Activated B cell treated with CpG ODN at 0.5 μM for 24 hours (primary cell): ENCODE measurements at regions of chr11 and their contacts with region 1.

Region 1: GRCh38 chr11:60477035-60477445 is 15.5 kb upstream of the MS4A12 start:
- DNase-seq: no peak
- ATAC-seq: peak; percentile 95
- H3K4me3 Mint-ChIP-seq: peak overlapping the region; percentile 64
- H3K27ac Mint-ChIP-seq: peak overlapping the region; percentile 91
- H3K4me1 Mint-ChIP-seq: peaks cover 65% of the 10 kb centered on the region
- H3K27me3 Mint-ChIP-seq: no peaks in the 10 kb centered on the region
- CTCF ChIP-seq: no peak

Region 2: GRCh38 chr11:60310407-60311279 is 166.4 kb before region 1 on chr11:
- CTCF ChIA-PET with region 1: no interaction called
- POLR2A ChIA-PET with region 1: interaction called, 15 read pairs
- intact Hi-C with region 1: no loop called
- DNase-seq: no peak
- ATAC-seq: peak; percentile 75
- H3K4me3 Mint-ChIP-seq: peak overlapping the region; percentile 58
- H3K27ac Mint-ChIP-seq: peak overlapping the region; percentile 91
- H3K4me1 Mint-ChIP-seq: peaks cover 49% of the 10 kb centered on the region
- H3K27me3 Mint-ChIP-seq: no peaks in the 10 kb centered on the region
- CTCF ChIP-seq: no peak

Region 3: DNA sequence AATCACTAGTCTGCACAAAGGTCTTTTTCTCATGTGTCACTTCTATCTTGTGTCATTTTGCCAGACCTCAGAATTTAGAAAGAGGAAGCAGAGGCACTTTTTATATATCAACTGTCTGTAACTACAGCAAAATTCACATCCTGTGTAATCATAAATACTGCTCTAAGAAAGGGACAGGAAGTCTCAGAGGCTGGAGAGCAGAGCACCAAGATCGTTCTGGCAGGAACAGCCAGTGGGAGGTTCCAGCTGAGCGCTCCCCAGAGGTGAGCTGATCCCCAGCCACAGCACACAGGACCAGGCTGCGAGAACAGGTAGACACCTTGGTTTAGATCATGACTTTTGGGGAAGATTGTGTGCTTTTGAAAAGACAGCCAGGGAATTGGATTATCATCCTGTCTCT is 98.7 kb before region 1 on chr11 and contains the start of gene MS4A7:
- CTCF ChIA-PET with region 1: no interaction called
- POLR2A ChIA-PET with region 1: interaction called, 12 read pairs
- intact Hi-C with region 1: loop called (anchors 1 kb)
- DNase-seq: peak; percentile 41
- ATAC-seq: peak; percentile 85
- H3K4me3 Mint-ChIP-seq: peak within 1 kb of the TSS; percentile 90
- H3K27ac Mint-ChIP-seq: peak within 1 kb of the TSS; percentile 99
- H3K4me1 Mint-ChIP-seq: peaks cover 84% of the 10 kb centered on the region
- H3K27me3 Mint-ChIP-seq: no peaks in the 10 kb centered on the region
- CTCF ChIP-seq: no peak
- total RNA-seq, gene MS4A7: 43.1 and 51.1 TPM in 2 replicates

Region 4: DNA sequence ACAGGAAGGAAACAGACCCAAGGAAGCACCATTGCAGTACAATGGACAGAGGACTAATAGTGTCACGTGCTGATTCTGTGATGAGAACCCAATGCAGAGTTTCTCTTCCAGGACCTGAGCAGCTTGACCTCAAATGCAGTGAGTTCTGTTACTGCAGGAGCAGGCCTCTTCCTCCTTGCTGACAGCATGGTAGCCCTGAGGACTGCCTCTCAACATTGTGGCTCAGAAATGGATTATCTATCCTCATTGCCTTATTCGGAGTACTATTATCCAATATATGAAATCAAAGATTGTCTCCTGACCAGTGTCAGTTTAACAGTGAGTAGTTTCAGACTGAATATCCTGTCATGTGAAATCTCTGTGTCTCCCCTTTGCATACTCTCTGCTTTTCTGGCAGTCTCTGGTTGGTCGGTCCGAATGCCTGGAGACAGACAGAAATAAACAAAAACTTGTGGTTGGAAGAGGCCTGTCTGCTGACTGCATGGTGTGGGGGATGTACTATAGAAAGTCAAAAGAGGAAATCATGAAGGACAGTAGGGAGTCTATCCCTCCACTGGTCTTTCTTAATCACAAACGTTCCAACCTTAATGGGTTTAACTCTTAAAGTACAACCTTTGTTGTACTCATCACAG is 87.6 kb before region 1 on chr11:
- CTCF ChIA-PET with region 1: no interaction called
- POLR2A ChIA-PET with region 1: interaction called, 14 read pairs
- intact Hi-C with region 1: no loop called
- DNase-seq: no peak
- ATAC-seq: peak; percentile 92
- H3K4me3 Mint-ChIP-seq: peak overlapping the region; percentile 58
- H3K27ac Mint-ChIP-seq: peak overlapping the region; percentile 88
- H3K4me1 Mint-ChIP-seq: peaks cover 49% of the 10 kb centered on the region
- H3K27me3 Mint-ChIP-seq: no peaks in the 10 kb centered on the region
- CTCF ChIP-seq: no peak

Region 5: GRCh38 chr11:60513496-60514460 is 36.7 kb after region 1 on chr11:
- CTCF ChIA-PET with region 1: no interaction called
- POLR2A ChIA-PET with region 1: interaction called, 15 read pairs
- intact Hi-C with region 1: no loop called
- DNase-seq: no peak
- ATAC-seq: no peak
- H3K4me3 Mint-ChIP-seq: no peak overlapping the region
- H3K27ac Mint-ChIP-seq: no peak overlapping the region
- H3K4me1 Mint-ChIP-seq: peaks cover 14% of the 10 kb centered on the region
- H3K27me3 Mint-ChIP-seq: peaks cover 4% of the 10 kb centered on the region
- CTCF ChIP-seq: no peak